Vagina (tissue), 2 donors: ENCODE measurements at regions of chr4 and their contacts with region 1.

Region 1: GRCh38 chr4:99949034-99949998 is 759 bp downstream of the H2AZ1 start:
- DNase-seq: peak in 1 of 2 donors; percentile 93
- H3K4me3 ChIP-seq: peak overlapping the region; percentile 89 to 97
- H3K27ac ChIP-seq: peak overlapping the region; percentile 95
- H3K4me1 ChIP-seq: peaks cover 48% of the 10 kb centered on the region
- H3K27me3 ChIP-seq: no peaks in the 10 kb centered on the region
- CTCF ChIP-seq: peak; percentile 24 to 82 (median 70)
- POLR2A ChIP-seq: no peak

Region 2: DNA sequence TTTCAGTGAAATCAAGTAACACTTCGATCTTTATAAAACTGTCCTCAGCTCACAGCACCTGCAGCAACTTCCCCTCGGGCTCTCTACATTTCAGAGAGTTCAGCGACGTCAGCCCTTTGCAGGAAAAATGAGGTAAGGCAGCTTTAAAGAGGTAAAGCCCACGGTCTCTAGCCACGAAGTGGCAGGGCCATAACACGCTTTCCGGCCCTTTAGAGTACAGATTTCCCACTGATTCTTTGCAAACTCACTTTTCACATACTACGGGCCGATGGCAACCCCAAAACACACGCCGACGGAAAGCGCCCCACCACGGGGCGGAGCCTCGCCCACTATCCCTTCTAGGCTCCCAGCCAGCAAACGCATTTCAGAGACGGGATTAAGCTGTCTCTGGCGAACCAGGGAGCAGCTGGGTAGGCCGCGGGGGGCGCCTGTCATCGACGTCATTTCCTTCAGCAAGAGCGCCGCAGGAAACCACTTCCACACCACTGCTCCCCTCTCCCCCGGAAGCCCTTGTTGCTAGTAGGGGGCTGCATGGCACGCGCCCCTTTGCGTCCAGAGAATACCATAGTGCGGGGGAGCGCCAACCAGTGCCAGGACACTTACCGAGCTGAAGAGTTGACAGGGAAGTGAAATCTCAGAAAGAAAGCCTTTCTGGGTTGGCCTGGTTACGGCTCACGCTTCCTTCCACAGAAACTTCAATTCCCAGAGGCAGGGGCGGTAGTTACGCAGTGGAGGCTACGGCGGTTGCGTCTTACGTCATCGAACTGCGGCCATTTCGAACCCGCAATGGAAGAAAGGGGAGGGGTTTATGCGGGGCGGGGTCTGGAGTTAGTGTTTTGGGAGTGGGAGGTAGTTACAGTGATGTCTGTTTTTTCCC is 385.8 kb before region 1 on chr4 and contains the start of gene TRMT10A:
- intact Hi-C with region 1: loop called (anchors 2 kb)
- DNase-seq: peak in 1 of 2 donors; percentile 97
- H3K4me3 ChIP-seq: peak within 1 kb of the TSS; percentile 66 to 75
- H3K27ac ChIP-seq: peak within 1 kb of the TSS; percentile 93
- H3K4me1 ChIP-seq: peaks cover 11% of the 10 kb centered on the region
- H3K27me3 ChIP-seq: no peaks in the 10 kb centered on the region
- CTCF ChIP-seq: peak in 1 of 3 experiments; percentile 9
- POLR2A ChIP-seq: peak in 1 of 2 donors; percentile 40
- total RNA-seq, gene TRMT10A: 1.2 TPM